Activated B cell treated with CpG ODN at 0.5 μM for 24 hours (primary cell): ENCODE measurements at regions of chr7 and their contacts with region 1.

Region 1: GRCh38 chr7:106285051-106285854 is 470 bp upstream of the NAMPT start:
- DNase-seq: peak; percentile 96
- ATAC-seq: peak; percentile 85
- H3K4me3 Mint-ChIP-seq: peak overlapping the region; percentile 89
- H3K27ac Mint-ChIP-seq: peak overlapping the region; percentile 98
- H3K4me1 Mint-ChIP-seq: peaks cover 31% of the 10 kb centered on the region
- H3K27me3 Mint-ChIP-seq: no peaks in the 10 kb centered on the region
- CTCF ChIP-seq: no peak

Region 2: DNA sequence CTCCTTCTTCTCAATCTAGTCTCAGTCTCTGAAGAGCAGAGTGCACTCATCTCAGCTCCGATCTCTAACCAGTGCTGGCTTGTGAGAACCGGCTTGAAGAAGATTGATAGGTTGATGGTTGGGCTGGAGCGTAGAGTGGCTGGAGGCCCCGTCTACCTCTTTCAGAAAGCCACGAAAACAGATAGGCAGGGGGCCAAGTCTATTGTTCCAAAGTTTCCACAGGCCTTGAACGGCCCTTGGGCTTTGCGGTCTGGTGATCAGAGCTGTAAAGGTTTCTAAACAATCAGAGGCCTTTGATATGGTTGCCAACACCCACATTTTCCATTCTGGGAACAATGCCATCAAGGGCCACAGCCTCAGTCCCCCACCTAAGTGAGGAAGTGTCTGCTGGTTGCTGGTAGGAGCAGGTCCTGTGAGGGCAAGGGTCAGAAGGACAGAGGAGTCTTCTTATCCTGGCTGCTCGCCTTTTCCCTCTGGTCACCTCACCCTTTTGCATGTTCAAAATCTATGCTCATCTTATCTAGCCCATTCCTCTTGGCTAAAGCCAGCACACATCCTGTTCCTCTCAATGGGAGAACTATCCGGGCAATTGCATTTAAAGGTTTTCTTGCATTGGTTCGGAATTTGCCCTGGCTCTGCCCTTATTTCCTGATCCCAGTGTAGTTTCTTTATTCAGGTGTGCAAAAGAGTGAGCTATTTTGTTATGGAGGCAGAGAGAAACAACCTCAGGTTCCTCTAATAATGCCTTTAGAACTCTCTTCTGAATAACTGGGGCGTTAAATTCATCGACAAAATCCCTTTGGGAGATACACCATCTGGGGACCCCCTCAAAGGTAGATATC is 1341.5 kb before region 1 on chr7:
- CTCF ChIA-PET with region 1: no interaction called
- POLR2A ChIA-PET with region 1: no interaction called
- intact Hi-C with region 1: loop called (anchors 10 kb)
- DNase-seq: peak; percentile 53
- ATAC-seq: peak; percentile 9
- H3K4me3 Mint-ChIP-seq: peak overlapping the region; percentile 98
- H3K27ac Mint-ChIP-seq: peak overlapping the region; percentile 100
- H3K4me1 Mint-ChIP-seq: peaks cover 83% of the 10 kb centered on the region
- H3K27me3 Mint-ChIP-seq: no peaks in the 10 kb centered on the region
- CTCF ChIP-seq: no peak

Region 3: DNA sequence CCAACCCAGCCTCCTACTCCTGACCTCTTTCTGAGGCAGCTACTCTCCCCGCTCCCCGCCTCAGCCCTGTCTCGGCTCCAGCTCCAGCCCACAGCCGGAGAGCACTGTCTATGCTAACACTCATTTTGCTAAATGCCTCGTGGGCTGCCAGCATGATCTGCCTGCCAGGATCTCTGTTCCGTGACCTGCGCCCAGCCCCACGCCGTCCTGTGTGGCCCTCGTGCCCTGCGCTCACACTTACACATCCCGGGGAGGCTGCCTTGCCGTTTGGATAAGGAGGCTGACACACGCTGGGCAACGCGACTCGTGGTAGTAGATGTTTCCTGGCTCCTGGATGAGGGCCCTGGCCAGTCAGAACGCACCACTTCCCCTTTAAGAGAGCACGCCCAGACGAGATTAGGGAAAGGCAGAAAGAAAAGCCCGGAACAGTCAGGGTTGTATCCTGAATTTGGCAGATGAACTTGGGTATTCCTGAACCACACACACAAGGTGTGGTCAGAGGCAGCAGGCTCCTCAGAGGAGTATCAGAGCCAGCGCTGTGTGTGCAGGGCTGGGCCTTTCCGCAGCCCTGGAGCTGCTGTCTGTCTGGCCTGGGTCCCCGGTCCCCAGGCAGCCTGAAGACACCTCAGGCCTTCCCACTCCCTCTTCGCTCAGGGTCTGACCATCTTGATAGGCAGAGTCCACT is 606.3 kb before region 1 on chr7:
- CTCF ChIA-PET with region 1: no interaction called
- POLR2A ChIA-PET with region 1: no interaction called
- intact Hi-C with region 1: loop called (anchors 10 kb)
- DNase-seq: peak; percentile 42
- ATAC-seq: peak; percentile 62
- H3K4me3 Mint-ChIP-seq: peak overlapping the region; percentile 94
- H3K27ac Mint-ChIP-seq: peak overlapping the region; percentile 89
- H3K4me1 Mint-ChIP-seq: peaks cover 57% of the 10 kb centered on the region
- H3K27me3 Mint-ChIP-seq: no peaks in the 10 kb centered on the region
- CTCF ChIP-seq: no peak

Region 4: GRCh38 chr7:106112117-106112971 is 172.9 kb before region 1 on chr7 and contains the start of gene SYPL1:
- CTCF ChIA-PET with region 1: no interaction called
- POLR2A ChIA-PET with region 1: interaction called, 15 read pairs
- intact Hi-C with region 1: loop called (anchors 2 kb)
- DNase-seq: peak; percentile 94
- ATAC-seq: peak; percentile 76
- H3K4me3 Mint-ChIP-seq: peak within 1 kb of the TSS; percentile 94
- H3K27ac Mint-ChIP-seq: peak within 1 kb of the TSS; percentile 97
- H3K4me1 Mint-ChIP-seq: peaks cover 80% of the 10 kb centered on the region
- H3K27me3 Mint-ChIP-seq: no peaks in the 10 kb centered on the region
- CTCF ChIP-seq: no peak
- total RNA-seq, gene SYPL1: 109 and 116 TPM in 2 replicates

Region 5: DNA sequence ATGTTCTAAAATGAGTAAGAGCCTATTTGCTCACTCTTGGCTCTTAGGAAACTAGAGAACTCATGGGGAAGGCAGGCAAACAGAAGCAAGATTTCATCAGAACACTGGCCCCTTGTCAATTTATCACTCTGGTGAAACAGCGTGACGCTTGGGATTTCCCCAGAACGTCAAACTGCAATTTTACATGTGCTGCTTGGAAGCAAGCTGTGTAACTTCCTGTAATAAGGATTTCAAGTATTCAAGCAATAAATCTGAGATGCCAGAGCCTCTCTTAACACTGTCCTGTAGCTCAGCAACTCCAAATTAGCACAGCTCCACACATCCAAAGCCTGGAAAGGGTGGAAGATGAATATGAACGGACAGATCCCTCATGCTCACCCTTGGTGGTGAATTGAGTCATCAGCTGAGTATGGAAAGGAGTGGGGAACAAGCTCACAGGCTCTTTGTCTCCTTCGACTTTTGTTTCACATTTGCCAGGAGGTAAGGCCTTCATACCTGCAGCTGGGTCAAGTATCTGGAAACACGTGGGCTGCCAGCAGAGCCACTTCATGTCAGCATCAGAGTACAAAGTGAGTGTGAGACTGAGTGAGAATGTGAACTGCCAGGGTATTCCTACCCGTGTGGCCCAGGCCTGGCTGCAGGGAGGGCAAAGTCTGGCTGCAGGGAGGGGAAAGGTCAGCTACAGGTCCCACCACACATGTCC is 139.9 kb after region 1 on chr7:
- CTCF ChIA-PET with region 1: interaction called, 3 read pairs
- POLR2A ChIA-PET with region 1: interaction called, 74 read pairs
- intact Hi-C with region 1: loop called (anchors 1 kb)
- DNase-seq: peak; percentile 36
- ATAC-seq: peak; percentile 90
- H3K4me3 Mint-ChIP-seq: peak overlapping the region; percentile 72
- H3K27ac Mint-ChIP-seq: peak overlapping the region; percentile 94
- H3K4me1 Mint-ChIP-seq: peaks cover 34% of the 10 kb centered on the region
- H3K27me3 Mint-ChIP-seq: no peaks in the 10 kb centered on the region
- CTCF ChIP-seq: no peak

Region 6: GRCh38 chr7:106598663-106599342 is 313.6 kb after region 1 on chr7:
- CTCF ChIA-PET with region 1: no interaction called
- POLR2A ChIA-PET with region 1: no interaction called
- intact Hi-C with region 1: loop called (anchors 1 kb)
- DNase-seq: peak; percentile 34
- ATAC-seq: peak; percentile 100
- H3K4me3 Mint-ChIP-seq: peak overlapping the region; percentile 52
- H3K27ac Mint-ChIP-seq: peak overlapping the region; percentile 68
- H3K4me1 Mint-ChIP-seq: peaks cover 6% of the 10 kb centered on the region
- H3K27me3 Mint-ChIP-seq: no peaks in the 10 kb centered on the region
- CTCF ChIP-seq: no peak

Region 7: GRCh38 chr7:106865130-106866041 is 580.1 kb after region 1 on chr7 and contains the start of gene PIK3CG:
- CTCF ChIA-PET with region 1: no interaction called
- POLR2A ChIA-PET with region 1: interaction called, 3 read pairs
- intact Hi-C with region 1: loop called (anchors 10 kb)
- DNase-seq: no peak
- ATAC-seq: peak; percentile 83
- H3K4me3 Mint-ChIP-seq: peak within 1 kb of the TSS; percentile 91
- H3K27ac Mint-ChIP-seq: peak within 1 kb of the TSS; percentile 90
- H3K4me1 Mint-ChIP-seq: peaks cover 71% of the 10 kb centered on the region
- H3K27me3 Mint-ChIP-seq: no peaks in the 10 kb centered on the region
- CTCF ChIP-seq: no peak
- total RNA-seq, gene PIK3CG: 62.0 and 63.6 TPM in 2 replicates